Calu3 (cell line): ENCODE measurements at regions of chr15 and their contacts with region 1.

Region 1: DNA sequence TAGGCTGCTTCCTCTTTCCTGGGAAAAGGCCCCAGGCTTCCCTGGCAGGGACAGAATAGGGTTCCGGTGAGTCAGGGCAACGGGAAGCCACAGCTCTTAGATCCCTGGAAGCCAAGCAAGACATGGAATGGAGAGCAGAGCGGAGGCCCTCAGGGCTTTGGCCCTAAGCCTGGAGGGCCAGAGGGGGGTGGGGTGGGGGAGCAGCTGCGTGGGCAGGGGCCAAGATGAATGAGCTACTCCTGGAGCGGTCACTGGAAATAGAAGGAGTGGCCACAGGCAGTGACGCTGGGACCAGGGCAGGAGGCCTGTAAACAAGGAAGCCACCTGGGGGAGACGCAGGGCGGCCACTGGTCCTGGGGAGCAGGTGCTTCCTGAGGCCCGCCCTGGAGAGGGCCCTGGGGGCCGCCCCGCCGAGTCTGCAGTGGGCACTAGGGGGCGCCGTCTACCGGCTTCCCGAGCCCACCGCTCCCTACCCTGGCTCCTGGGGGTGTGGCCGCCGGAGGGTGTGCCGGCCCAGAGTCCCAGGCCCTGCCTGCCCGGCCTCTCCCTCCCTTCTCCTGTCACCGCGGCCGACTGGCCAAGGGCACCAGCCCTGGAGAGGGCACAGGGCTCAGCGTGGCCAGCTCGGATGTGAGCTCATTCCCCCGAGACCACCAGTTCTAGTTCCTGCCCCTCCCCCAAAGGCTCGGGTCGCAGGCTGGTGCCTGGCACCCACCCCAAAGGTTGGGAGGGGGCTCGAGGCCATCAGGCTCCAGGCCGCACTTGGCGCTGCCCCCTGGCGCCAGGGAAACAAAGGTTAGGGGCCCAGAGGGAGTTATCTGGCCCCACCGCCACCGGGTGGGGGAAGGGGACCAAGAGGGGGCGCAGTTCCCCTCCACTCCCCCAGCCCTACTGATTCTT is 12.1 kb downstream of the VPS18 start:
- DNase-seq: peak; percentile 88
- H3K4me3 Mint-ChIP-seq: no peak overlapping the region
- H3K27ac Mint-ChIP-seq: peak overlapping the region; percentile 20
- H3K4me1 Mint-ChIP-seq: no peaks in the 10 kb centered on the region
- H3K27me3 Mint-ChIP-seq: no peaks in the 10 kb centered on the region
- CTCF ChIP-seq: peak; percentile 54

Region 2: GRCh38 chr15:40493089-40493840 is 413.1 kb before region 1 on chr15:
- CTCF ChIA-PET with region 1: no interaction called
- intact Hi-C with region 1: no loop called
- DNase-seq: no peak
- H3K4me3 Mint-ChIP-seq: no peak overlapping the region
- H3K27ac Mint-ChIP-seq: no peak overlapping the region
- H3K4me1 Mint-ChIP-seq: no peaks in the 10 kb centered on the region
- H3K27me3 Mint-ChIP-seq: peaks cover 28% of the 10 kb centered on the region
- CTCF ChIP-seq: no peak

Region 3: DNA sequence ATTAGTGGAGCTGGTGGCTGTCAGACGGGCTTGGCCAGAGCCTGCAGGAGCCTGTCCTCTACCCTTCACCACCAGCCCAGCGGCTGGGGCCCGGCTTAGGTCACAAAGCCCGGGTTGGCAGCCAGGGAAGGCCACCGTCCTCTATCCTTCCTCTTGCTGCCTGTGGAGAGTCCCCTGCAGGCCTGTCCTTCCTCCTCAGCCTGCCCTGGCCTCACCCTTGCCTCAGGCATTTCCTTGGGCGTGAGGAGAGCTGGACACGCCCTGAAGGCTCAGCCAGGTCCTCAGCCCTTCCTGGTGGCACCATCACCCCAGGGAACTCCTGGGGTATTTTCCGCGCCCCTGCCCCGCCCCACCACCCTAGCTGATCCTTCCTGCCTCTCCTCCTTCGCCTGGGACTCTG is 54.6 kb after region 1 on chr15:
- CTCF ChIA-PET with region 1: no interaction called
- intact Hi-C with region 1: loop called (anchors 10 kb)
- DNase-seq: peak; percentile 74
- H3K4me3 Mint-ChIP-seq: no peak overlapping the region
- H3K27ac Mint-ChIP-seq: no peak overlapping the region
- H3K4me1 Mint-ChIP-seq: peaks cover 11% of the 10 kb centered on the region
- H3K27me3 Mint-ChIP-seq: no peaks in the 10 kb centered on the region
- CTCF ChIP-seq: no peak

Region 4: GRCh38 chr15:41022487-41023090 is 116.2 kb after region 1 on chr15:
- CTCF ChIA-PET with region 1: interaction called, 4 read pairs
- intact Hi-C with region 1: loop called (anchors 1 kb)
- DNase-seq: peak; percentile 26
- H3K4me3 Mint-ChIP-seq: no peak overlapping the region
- H3K27ac Mint-ChIP-seq: no peak overlapping the region
- H3K4me1 Mint-ChIP-seq: no peaks in the 10 kb centered on the region
- H3K27me3 Mint-ChIP-seq: no peaks in the 10 kb centered on the region
- CTCF ChIP-seq: no peak

Region 5: DNA sequence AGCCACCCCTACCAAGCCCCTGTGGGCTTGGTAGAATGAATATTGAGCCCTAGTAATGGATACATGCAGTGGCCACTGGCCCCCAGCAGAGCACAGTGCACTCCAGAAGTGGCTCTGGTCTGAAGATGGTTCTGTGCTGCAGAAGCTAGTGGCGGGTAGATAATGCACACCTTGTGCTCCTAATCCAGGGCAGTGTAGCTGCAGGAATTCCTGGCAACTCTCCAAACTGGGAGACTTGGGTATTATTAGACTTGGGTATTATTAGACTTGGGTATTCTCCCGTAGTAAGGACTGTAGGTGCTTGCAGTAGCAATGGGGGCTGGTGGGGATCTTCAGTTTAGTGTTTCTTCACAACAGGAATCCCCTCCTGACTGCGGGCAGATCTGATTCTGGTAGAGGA is 461.1 kb after region 1 on chr15:
- CTCF ChIA-PET with region 1: no interaction called
- intact Hi-C with region 1: no loop called
- DNase-seq: no peak
- H3K4me3 Mint-ChIP-seq: no peak overlapping the region
- H3K27ac Mint-ChIP-seq: no peak overlapping the region
- H3K4me1 Mint-ChIP-seq: no peaks in the 10 kb centered on the region
- H3K27me3 Mint-ChIP-seq: no peaks in the 10 kb centered on the region
- CTCF ChIP-seq: no peak